ENCODE measurements at regions of chr12 and their contacts with region 1.

Region 1: DNA sequence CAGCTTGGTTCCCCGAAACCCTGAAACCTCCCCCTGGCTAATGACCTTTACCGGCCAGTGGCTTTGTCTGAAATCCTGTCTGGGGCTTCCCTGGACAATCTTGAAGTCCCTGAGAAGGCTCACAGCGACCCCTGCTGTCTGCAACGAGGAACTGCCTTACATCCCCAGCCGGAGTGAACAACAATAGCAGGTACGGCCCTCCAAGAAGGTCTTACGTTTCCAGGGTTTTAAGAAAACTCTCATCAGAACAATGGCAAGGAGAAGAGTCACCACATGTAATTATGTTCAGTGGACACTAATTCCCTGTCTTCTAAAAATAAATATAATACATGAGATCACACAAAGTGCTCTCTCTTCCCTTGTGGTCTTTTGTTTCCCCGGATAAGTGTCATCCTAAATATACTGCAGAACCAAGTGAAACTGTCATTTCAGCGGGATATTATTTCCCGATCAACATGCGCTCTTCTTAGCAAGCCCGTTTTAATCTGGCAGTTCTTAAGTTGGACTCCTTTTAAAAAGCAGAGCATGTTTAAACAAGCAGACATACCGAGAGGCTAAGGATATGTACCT is 53.3 kb downstream of the RBM19 start:
- DNase-seq: peak; percentile 54
- ATAC-seq: peak; percentile 68 to 72

Region 2: GRCh38 chr12:113439606-113440030 is 473.2 kb before region 1 on chr12:
- intact Hi-C with region 1: loop called in 1 of 2 experiments (anchors 5 kb)
- DNase-seq: no peak
- ATAC-seq: peak; percentile 37 to 47

Region 3: GRCh38 chr12:113462117-113462774 is 450.6 kb before region 1 on chr12:
- intact Hi-C with region 1: loop called in 1 of 2 experiments (anchors 5 kb)
- DNase-seq: peak; percentile 84
- ATAC-seq: peak; percentile 86 to 87

Region 4: DNA sequence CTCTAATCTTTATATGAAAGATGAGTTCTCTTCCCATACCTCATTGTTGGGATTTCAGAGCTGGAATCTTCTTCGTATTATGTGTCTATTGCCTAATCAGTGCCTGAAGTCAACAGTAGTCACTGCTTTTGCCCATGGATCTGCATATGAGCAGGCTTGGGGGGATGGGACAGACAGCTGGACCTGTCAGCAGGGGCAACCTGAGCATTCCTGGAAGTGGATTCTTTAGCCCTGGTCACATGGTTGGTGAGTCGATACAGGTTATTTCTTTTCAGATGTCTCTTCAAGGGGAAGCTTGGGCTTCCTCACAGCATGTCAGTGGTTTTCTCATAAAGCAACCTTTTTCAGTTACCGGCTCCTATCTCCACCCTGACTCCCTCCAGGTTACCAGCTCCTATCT is 150.6 kb after region 1 on chr12:
- intact Hi-C with region 1: no loop called
- DNase-seq: no peak
- ATAC-seq: no peak